Dendritic cell treated with granulocyte-macrophage colony-stimulating factor and Interleukin-4, amounts not matched to agents 40 ng/mL and 50 ng/mL, for 4 days (primary cell): ENCODE measurements at regions of chr3 and their contacts with region 1.

Region 1: DNA sequence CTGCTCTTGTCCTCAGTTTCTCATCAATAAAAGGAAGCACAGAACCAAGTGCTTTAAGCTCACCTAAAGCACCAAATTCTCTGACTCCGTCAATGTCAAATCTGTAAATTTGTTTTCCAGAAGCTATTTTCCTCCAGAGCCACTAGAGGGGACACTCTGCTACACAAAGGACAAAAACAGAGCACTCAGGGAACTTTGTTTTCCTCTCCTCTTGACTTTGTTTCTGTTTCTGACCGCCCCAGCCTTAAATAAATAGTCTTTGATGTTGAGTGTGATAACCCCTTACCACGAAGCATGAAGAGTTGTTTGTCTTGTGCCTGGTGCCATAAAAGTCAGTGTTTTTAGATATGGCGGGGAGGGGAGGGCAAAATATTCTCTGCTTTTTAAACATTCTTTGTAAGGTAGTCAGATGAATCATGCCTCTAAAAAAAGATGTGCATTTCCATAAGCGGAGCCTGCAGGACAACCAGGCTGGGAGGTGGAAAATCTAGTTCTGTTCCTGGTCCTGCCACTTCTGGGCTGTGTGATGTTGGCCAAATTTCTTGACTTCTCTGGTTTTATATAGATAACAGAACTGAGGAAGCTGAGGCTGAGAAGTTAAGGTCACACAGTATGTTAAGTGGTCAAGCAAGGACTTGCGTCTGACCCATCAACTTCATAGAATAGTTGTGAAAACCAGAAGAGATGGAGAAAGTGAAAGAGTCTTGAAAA is 7.3 kb upstream of the ZBTB38 start:
- H3K4me3 Mint-ChIP-seq: no peak overlapping the region
- H3K27ac Mint-ChIP-seq: no peak overlapping the region
- H3K4me1 Mint-ChIP-seq: no peaks in the 10 kb centered on the region
- H3K27me3 Mint-ChIP-seq: peaks cover 6% of the 10 kb centered on the region

Region 2: DNA sequence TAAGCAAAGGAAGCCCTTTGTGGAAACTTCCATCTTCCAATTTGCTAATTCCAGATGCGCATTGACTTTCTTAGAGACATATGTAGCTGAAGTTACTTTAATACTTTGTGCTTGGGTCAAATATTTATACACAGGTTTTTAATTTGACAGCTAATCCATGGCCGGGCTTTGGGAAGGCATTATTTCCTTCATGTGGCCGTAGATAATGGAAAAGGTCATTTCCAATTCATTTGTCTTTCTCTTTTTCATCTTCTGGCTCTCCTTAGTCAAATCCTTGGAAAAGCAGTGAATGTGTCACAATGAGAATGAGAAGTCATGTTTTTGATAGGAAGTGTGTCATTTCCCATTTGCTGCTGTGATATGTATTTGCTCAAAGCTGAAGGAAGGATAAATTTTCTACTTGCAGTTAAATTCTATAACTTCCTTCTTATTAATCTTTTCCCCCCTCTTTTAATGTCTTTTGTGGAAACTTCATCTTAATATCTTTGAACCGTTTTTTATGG is 1102.8 kb before region 1 on chr3:
- intact Hi-C with region 1: no loop called
- H3K4me3 Mint-ChIP-seq: no peak overlapping the region
- H3K27ac Mint-ChIP-seq: no peak overlapping the region
- H3K4me1 Mint-ChIP-seq: no peaks in the 10 kb centered on the region
- H3K27me3 Mint-ChIP-seq: no peaks in the 10 kb centered on the region

Region 3: DNA sequence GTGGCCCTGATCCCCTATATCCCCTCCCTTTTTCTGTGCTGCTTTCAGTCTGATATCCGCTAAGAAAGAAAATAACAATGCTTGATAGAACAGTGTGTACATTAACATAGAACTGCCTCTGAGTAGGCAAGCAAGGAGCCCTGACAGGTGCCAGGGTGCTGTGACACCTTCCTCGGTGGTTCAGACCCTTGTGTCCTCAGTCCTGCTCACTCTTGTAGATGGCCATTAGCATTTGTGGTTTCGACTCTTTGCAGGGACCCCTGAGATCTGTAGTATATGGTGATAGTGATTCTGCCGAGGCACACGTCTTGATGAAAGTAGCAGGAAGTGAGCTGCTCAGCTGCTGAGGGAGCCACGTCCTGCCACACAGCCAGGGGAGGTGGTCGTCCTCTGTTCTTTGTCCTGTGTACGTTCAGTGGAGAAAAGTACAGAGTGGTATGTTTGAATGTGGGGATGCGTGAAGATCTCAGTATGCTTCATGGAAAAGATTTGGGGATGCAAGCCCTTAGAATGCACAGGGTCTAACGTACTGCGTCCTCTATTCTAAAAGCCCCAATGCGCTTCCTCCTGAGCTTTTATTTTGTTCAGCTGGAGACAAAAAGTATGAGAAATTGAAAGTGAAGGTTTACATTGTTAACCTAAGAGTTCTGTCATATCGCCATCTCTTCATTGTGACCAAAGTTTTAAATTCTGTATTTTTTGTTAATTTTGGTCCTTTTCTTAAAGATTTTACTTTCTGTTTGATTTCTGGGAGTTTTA is 94.1 kb before region 1 on chr3:
- intact Hi-C with region 1: no loop called
- H3K4me3 Mint-ChIP-seq: peak overlapping the region; percentile 73
- H3K27ac Mint-ChIP-seq: peak overlapping the region; percentile 67
- H3K4me1 Mint-ChIP-seq: peaks cover 39% of the 10 kb centered on the region
- H3K27me3 Mint-ChIP-seq: no peaks in the 10 kb centered on the region

Region 4: DNA sequence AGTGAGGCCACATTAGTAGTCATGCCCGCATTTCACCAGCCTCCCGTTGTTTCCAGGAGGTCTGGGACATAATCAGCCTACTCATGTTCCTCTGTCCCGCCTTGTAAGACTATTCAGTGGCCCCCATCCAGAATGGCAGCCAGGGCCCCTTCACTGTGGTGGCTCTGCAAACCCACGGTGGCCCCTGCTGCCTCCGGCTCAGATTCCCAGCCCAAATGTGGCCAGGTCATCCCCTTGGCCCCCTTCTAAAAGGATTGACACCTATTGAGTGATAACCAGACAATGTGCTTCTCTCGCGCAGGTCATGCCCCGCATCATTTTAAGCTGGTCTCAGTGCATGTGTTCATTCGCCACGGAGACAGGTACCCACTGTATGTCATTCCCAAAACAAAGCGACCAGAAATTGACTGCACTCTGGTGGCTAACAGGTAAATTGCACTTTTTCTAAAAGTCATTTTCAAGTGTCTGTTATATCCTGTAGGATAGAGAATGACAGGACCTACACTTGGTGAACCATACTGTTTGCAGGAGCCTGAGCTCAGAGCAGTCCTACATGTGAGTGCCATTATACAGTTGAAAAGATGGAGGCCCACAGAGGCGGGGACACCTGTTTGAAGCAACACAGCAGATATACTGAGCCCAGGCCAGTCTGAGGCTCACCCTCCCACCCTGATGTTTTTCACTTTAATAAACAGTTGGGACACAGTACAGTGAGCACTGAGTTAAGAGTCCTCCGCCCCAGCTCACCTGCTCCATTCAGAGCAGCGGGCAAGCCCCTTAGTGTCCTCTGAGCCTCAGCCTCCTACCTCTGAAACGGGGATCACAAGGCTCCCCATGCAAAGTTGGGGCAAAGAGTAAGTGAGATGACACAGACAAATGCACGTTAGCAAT is 81.7 kb before region 1 on chr3:
- intact Hi-C with region 1: no loop called
- H3K4me3 Mint-ChIP-seq: no peak overlapping the region
- H3K27ac Mint-ChIP-seq: no peak overlapping the region
- H3K4me1 Mint-ChIP-seq: peaks cover 11% of the 10 kb centered on the region
- H3K27me3 Mint-ChIP-seq: no peaks in the 10 kb centered on the region

Region 5: DNA sequence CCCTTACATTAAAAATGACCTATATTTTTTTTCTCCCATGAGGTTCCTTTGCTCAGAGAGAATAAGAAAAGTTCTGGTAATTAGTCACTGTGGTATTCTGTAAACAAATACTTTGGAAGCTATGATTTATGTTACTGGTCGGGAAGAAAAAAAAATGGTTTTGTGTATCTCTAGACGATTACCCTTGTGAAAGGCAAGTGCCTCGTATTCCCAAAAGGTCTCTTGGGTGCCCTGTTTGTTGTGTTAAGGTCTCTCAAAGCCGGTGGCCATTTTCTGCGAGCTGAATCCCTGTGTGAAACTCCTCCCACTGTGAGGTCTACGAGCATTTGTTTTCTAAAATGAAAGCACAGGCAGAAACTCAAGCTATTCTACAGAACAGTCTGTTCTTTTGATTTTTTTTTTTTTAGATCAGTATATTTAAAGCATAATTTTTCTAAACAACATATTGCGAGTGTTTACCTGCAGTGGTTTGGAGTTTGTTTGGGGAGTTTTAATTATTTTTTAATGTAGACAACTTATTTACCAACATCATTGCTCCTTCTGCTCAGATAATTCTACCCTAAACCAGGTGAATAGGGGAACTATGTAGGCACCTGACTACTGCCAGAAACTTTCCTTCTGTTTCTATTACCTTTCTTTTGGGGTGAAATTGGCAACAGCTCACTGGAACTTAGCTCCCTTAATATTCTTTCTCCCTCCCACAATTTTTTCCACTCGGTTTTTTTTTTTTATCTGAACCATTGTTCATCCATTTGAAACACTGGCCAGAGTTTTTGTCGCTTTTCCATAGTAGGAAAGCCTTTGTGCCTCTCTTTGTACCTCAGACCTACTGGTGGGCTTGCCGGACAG is 51.3 kb after region 1 on chr3:
- intact Hi-C with region 1: no loop called
- H3K4me3 Mint-ChIP-seq: peak overlapping the region; percentile 61
- H3K27ac Mint-ChIP-seq: peak overlapping the region; percentile 88
- H3K4me1 Mint-ChIP-seq: peaks cover 40% of the 10 kb centered on the region
- H3K27me3 Mint-ChIP-seq: no peaks in the 10 kb centered on the region

Region 6: DNA sequence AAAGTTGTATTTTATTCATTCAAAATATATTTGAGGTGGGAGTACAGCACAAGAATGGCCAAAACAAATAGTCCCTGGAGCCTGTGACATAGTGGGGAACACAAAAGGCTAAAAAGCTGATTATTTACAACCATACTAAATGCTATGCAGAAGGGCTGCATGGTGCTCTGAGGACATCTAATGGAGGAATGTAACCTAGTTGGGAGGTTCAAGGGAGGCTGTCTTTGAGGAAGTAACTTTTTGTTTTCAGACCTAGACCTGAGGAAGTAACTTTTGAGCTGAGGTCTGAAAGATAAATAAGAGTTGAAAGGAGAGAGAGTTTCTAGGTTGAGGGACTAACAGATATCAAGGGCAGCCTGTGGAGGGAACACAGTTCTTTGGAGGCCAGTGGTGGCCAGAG is 91.0 kb after region 1 on chr3:
- intact Hi-C with region 1: loop called (anchors 1 kb)
- H3K4me3 Mint-ChIP-seq: no peak overlapping the region
- H3K27ac Mint-ChIP-seq: no peak overlapping the region
- H3K4me1 Mint-ChIP-seq: peaks cover 13% of the 10 kb centered on the region
- H3K27me3 Mint-ChIP-seq: no peaks in the 10 kb centered on the region

Region 7: DNA sequence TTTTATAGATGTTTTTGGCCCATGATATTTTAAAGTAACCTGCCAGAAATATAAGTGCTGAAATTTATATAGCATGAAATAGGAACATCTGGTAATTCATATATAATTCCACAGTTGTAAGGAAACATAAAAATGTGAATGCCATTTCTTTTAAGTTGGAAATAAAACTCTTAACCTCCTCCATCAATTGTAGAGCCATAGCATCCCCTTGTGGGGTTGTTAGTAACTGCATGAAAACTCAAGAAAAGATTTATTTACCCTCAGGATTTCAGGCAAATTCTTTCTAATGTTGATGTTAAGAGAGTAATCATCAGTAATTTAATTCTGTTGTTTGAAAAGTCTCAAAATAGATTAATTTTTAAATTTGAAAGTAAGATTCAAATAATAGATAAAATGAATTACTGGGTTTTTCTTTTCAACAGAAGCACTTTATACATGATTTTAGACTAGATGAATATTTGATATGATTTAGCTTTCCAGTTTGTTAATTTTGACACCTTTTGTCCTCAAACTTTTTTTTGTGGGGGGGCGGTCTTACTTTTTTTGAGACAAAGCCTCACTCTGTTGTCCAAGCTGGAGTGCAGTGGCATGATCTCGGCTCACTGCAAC is 200.5 kb after region 1 on chr3:
- intact Hi-C with region 1: loop called (anchors 5 kb)
- H3K4me3 Mint-ChIP-seq: no peak overlapping the region
- H3K27ac Mint-ChIP-seq: no peak overlapping the region
- H3K4me1 Mint-ChIP-seq: no peaks in the 10 kb centered on the region
- H3K27me3 Mint-ChIP-seq: no peaks in the 10 kb centered on the region